IMR-90 (cell line): ENCODE measurements at regions of chr4 and their contacts with region 1.

Region 1: DNA sequence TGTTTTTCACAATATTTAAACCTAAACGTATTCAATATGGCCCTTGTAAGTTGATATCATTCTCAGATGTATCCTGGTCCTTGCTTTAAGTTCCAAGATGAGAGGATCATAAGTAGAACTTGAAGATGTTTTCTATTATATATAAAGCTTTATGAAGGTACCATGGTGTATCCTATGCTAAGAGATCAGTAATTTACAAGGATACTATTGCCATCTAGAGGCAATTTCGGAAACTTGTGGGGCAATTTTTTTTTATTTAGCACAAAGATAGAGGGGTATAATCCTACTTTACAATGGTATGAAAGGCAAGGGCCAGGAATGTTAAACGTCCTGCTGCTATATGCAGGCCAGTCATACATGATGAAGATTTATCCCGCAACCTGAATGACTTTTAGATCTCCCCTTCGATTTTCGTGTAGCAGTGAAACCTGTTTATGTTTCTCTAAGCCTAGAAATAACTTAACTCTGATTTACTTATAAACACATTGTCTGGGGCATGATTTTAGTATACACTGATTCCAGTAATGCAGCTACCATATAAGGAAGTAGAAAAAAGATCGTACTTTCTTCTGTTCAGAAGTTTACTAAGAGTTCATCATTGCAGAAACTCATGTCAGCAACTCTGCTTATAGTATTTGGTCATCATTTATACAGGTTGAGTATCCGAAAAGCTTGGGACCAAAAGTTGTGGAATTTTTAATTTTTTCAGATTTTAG is 2.6 kb downstream of the SLC25A31 start:
- DNase-seq: peak; percentile 60
- ATAC-seq: peak; percentile 95
- H3K4me3 ChIP-seq: peak overlapping the region; percentile 39; the same call in 1 of the 2 replicates
- H3K27ac ChIP-seq: no peak overlapping the region
- H3K4me1 ChIP-seq: no peaks in the 10 kb centered on the region; the same call in 1 of the 2 replicates
- H3K27me3 ChIP-seq: peaks cover 4% of the 10 kb centered on the region
- CTCF ChIP-seq: peak; percentile 77
- POLR2A ChIP-seq: no peak
- RAD21 ChIP-seq: peak; percentile 80

Region 2: DNA sequence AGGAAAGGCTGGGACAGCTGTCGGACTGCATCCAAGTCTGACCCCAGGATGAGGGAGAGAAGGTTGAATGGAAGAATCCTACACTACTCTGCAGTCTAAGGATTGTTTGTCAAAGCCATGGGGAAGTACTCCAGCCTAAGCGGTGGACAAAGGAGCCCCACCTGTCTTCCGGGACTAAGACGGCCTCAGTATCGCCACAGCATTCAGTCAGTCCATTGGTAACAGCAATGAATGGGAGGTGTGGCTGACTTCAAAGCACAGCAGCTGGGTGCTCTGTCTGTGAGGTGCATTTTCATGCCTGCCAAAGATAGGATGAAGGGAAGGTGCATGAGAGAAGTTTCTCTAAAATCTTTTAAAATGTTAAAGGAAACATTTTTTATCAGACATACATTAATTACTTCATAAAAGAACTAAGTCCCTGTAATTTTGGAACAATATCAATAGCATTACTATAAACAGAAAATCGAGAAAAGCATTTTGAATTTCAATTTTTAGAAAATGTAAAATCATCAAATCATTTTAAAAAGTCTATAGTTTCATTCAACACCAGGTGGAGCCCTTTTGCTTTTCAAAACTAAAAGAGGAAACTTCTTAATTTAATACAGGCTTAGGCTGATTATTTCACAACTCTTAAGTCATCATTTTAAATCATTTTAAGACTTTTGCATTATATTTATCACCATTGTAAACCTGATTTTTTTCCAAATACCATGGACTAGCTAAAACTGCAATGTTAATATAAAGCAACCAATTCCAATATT is 127.6 kb before region 1 on chr4:
- CTCF ChIA-PET with region 1: interaction called, 26 read pairs
- POLR2A ChIA-PET with region 1: no interaction called
- dilution Hi-C with region 1: no loop called
- in situ Hi-C with region 1: loop called (anchors 5 kb)
- intact Hi-C with region 1: loop called (anchors 1 kb)
- DNase-seq: peak; percentile 48
- ATAC-seq: no peak
- H3K4me3 ChIP-seq: no peak overlapping the region
- H3K27ac ChIP-seq: no peak overlapping the region
- H3K4me1 ChIP-seq: no peaks in the 10 kb centered on the region
- H3K27me3 ChIP-seq: peaks cover 10% of the 10 kb centered on the region
- CTCF ChIP-seq: peak; percentile 72
- POLR2A ChIP-seq: no peak
- RAD21 ChIP-seq: peak; percentile 64

Region 3: DNA sequence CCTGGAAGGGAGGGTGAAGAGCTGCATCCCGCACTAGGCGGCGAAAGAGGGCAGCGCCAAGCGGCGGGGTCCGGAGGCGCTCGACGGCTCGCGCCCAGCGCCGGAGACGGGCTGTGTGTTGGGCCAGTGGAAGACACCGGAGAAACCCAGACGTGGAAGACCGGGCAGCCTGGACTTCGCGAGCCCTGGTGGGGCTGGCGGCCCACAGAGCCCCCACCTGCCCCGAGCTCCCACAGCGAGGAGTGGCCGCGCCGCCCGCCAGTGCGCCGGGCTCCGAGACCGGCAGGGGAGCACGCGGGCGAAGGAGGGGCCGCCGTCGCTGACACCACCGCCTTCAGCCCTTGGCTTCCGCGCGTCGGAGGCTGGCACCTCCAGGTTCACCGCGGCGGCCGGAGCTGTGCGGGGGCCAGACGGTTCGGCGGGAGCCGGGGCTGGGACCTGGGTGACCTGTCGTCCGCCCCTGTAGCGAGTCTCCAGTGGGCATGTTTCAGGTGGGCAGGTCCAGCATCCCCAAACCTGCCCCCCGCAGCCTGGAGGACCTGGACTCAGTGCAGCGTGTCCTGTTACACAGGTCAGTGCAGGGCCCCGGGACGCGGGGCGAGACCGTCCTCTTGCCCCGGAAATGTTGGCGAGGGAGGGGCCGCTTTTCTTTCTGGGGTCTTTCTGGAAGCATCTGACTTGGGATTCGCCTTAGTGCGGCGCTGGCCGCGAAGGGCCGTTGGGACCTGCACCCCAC is 109.7 kb before region 1 on chr4:
- CTCF ChIA-PET with region 1: interaction called, 5 read pairs
- POLR2A ChIA-PET with region 1: no interaction called
- dilution Hi-C with region 1: no loop called
- in situ Hi-C with region 1: no loop called
- intact Hi-C with region 1: loop called (anchors 5 kb)
- DNase-seq: peak; percentile 33
- ATAC-seq: peak; percentile 85
- H3K4me3 ChIP-seq: peak overlapping the region; percentile 90
- H3K27ac ChIP-seq: peak overlapping the region; percentile 38; the same call in 1 of the 2 replicates
- H3K4me1 ChIP-seq: no peaks in the 10 kb centered on the region
- H3K27me3 ChIP-seq: peaks cover 4% of the 10 kb centered on the region
- CTCF ChIP-seq: peak; percentile 30
- POLR2A ChIP-seq: no peak
- RAD21 ChIP-seq: 0 out of 2 replicates have a peak, but pooled peaks have one; percentile 11

Region 4: GRCh38 chr4:127747883-127748282 is 15.1 kb after region 1 on chr4:
- CTCF ChIA-PET with region 1: interaction called, 16 read pairs
- POLR2A ChIA-PET with region 1: no interaction called
- dilution Hi-C with region 1: no loop called
- in situ Hi-C with region 1: no loop called
- intact Hi-C with region 1: no loop called
- DNase-seq: no peak
- ATAC-seq: no peak
- H3K4me3 ChIP-seq: no peak overlapping the region
- H3K27ac ChIP-seq: no peak overlapping the region
- H3K4me1 ChIP-seq: no peaks in the 10 kb centered on the region
- H3K27me3 ChIP-seq: no peaks in the 10 kb centered on the region
- CTCF ChIP-seq: no peak
- POLR2A ChIP-seq: no peak
- RAD21 ChIP-seq: no peak

Region 5: GRCh38 chr4:127905029-127905428 is 172.3 kb after region 1 on chr4:
- CTCF ChIA-PET with region 1: no interaction called
- POLR2A ChIA-PET with region 1: no interaction called
- dilution Hi-C with region 1: no loop called
- in situ Hi-C with region 1: no loop called
- intact Hi-C with region 1: no loop called
- DNase-seq: no peak
- ATAC-seq: no peak
- H3K4me3 ChIP-seq: no peak overlapping the region
- H3K27ac ChIP-seq: no peak overlapping the region
- H3K4me1 ChIP-seq: no peaks in the 10 kb centered on the region
- H3K27me3 ChIP-seq: no peaks in the 10 kb centered on the region
- CTCF ChIP-seq: no peak
- POLR2A ChIP-seq: no peak
- RAD21 ChIP-seq: no peak

Region 6: DNA sequence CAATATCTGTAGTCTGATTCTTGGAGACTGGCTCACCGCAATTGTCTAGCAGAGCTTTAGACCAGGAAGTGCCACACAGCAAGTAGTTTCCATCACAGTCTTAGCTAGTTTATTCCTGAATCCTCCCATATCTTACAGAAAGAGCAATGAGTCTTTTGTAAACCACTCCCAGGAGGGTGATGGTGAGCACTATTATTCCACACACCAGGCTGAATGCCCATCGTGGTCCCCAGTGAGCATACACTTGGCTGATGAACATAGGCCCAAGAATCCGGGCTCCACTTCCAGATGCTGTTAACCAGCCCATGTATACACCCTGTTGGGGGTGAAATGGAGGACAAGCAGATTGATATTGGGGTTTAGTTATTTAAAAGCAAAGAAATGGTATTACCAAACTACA is 187.8 kb after region 1 on chr4:
- CTCF ChIA-PET with region 1: no interaction called
- POLR2A ChIA-PET with region 1: no interaction called
- dilution Hi-C with region 1: no loop called
- in situ Hi-C with region 1: no loop called
- intact Hi-C with region 1: no loop called
- DNase-seq: no peak
- ATAC-seq: no peak
- H3K4me3 ChIP-seq: no peak overlapping the region
- H3K27ac ChIP-seq: no peak overlapping the region
- H3K4me1 ChIP-seq: no peaks in the 10 kb centered on the region
- H3K27me3 ChIP-seq: no peaks in the 10 kb centered on the region
- CTCF ChIP-seq: no peak
- POLR2A ChIP-seq: no peak
- RAD21 ChIP-seq: no peak